ENCODE measurements at regions of chr2 and their contacts with region 1.

Region 1: DNA sequence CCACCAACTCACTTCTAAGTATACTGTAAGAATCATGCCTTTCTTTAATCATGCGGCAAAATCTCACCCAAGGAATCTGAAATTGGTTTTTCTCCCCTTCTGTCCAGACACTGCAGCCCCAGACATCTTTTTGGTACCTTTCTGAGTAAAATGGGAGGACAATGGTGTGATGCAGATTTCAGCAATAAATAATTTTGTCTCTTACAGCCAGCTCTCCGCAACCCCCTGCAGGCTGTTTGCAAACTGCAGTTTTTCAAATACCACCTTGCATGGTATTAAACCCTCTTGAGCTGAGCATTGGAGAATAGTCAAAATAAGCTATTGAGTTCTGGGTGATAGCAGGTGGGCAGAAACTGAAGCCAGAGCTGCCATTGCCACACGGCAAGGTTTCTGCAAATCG is 32.2 kb downstream of the GPR39 start:
- DNase-seq: peak; percentile 39
- ATAC-seq: peak; percentile 84
- H3K4me3 Mint-ChIP-seq: no peak overlapping the region
- H3K27ac Mint-ChIP-seq: no peak overlapping the region
- H3K4me1 Mint-ChIP-seq: peaks cover 16% of the 10 kb centered on the region
- H3K27me3 Mint-ChIP-seq: no peaks in the 10 kb centered on the region; the same call in 1 of the 2 replicates
- CTCF ChIP-seq: peak; percentile 47

Region 2: GRCh38 chr2:132267105-132267497 is 181.7 kb before region 1 on chr2:
- CTCF ChIA-PET with region 1: interaction called, 12 read pairs
- POLR2A ChIA-PET with region 1: no interaction called
- DNase-seq: no peak
- ATAC-seq: peak; percentile 41; the same call in 1 of the 2 replicates
- H3K4me3 Mint-ChIP-seq: no peak overlapping the region
- H3K27ac Mint-ChIP-seq: no peak overlapping the region
- H3K4me1 Mint-ChIP-seq: no peaks in the 10 kb centered on the region
- H3K27me3 Mint-ChIP-seq: no peaks in the 10 kb centered on the region
- CTCF ChIP-seq: no peak

Region 3: GRCh38 chr2:132438691-132439090 is 10.1 kb before region 1 on chr2:
- CTCF ChIA-PET with region 1: interaction called, 20 read pairs
- POLR2A ChIA-PET with region 1: no interaction called
- DNase-seq: no peak
- ATAC-seq: no peak
- H3K4me3 Mint-ChIP-seq: no peak overlapping the region
- H3K27ac Mint-ChIP-seq: no peak overlapping the region
- H3K4me1 Mint-ChIP-seq: peaks cover 55% of the 10 kb centered on the region
- H3K27me3 Mint-ChIP-seq: no peaks in the 10 kb centered on the region
- CTCF ChIP-seq: no peak

Measured in WTC11 (cell line).